ENCODE measurements at regions of chr4 and their contacts with region 1.

Region 1: GRCh38 chr4:88528861-88529260 is 5.3 kb upstream of the PYURF start:
- DNase-seq: no peak
- H3K4me3 ChIP-seq: no peak overlapping the region
- CTCF ChIP-seq: no peak

Region 2: GRCh38 chr4:88659055-88659889 is 130.4 kb after region 1 on chr4:
- CTCF ChIA-PET with region 1: interaction called, 34 read pairs
- POLR2A ChIA-PET with region 1: no interaction called
- DNase-seq: no peak
- H3K4me3 ChIP-seq: no peak overlapping the region
- CTCF ChIP-seq: peak; percentile 61

Region 3: GRCh38 chr4:88697588-88698329 is 168.9 kb after region 1 on chr4 and contains the start of gene NAP1L5:
- CTCF ChIA-PET with region 1: interaction called, 15 read pairs
- POLR2A ChIA-PET with region 1: no interaction called
- DNase-seq: no peak
- H3K4me3 ChIP-seq: peak within 1 kb of the TSS; percentile 63
- CTCF ChIP-seq: no peak

Region 4: DNA sequence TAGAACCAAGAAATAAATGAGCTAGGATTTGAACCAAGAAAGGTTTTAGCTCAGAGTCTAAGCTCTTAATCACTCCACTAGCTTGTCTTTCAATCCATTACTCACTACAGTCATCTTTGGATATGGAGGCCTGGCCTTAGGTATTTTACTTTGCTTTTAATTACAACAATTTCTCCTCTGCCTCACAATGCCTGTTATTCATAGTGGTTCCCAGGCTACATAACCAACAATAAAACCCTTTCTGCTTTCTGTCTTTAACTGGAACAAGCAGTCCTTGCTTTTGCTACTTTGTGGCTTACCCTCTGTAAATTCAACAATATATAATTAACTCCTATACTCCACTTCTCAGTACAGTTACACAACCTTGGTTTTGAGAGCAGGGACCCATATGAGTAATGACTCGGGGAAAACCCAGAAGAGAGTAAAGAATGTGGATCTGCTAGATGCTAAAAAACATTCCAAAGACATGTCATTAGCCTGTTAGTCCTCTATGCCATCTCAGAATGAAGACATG is 263.5 kb after region 1 on chr4:
- CTCF ChIA-PET with region 1: interaction called, 11 read pairs
- POLR2A ChIA-PET with region 1: no interaction called
- DNase-seq: peak; percentile 84
- H3K4me3 ChIP-seq: no peak overlapping the region
- CTCF ChIP-seq: no peak

Region 5: GRCh38 chr4:88818631-88819470 is 290.0 kb after region 1 on chr4:
- CTCF ChIA-PET with region 1: interaction called, 12 read pairs
- POLR2A ChIA-PET with region 1: no interaction called
- DNase-seq: no peak
- H3K4me3 ChIP-seq: no peak overlapping the region
- CTCF ChIP-seq: peak; percentile 45

Region 6: GRCh38 chr4:88866862-88867550 is 338.1 kb after region 1 on chr4:
- CTCF ChIA-PET with region 1: no interaction called
- POLR2A ChIA-PET with region 1: no interaction called
- DNase-seq: peak; percentile 23
- H3K4me3 ChIP-seq: no peak overlapping the region
- CTCF ChIP-seq: no peak